Caco-2 (cell line): ENCODE measurements at regions of chr2 and their contacts with region 1.

Region 1: GRCh38 chr2:204325468-204325867 is 219.8 kb upstream of the PARD3B start:
- DNase-seq: peak; percentile 89 to 90
- H3K4me3 ChIP-seq: no peak overlapping the region
- H3K4me3 Mint-ChIP-seq: no peak overlapping the region
- H3K27ac Mint-ChIP-seq: peak overlapping the region; percentile 56
- H3K4me1 ChIP-seq: peaks cover 4% of the 10 kb centered on the region
- H3K4me1 Mint-ChIP-seq: peaks cover 28% of the 10 kb centered on the region
- H3K27me3 ChIP-seq: no peaks in the 10 kb centered on the region
- H3K27me3 Mint-ChIP-seq: no peaks in the 10 kb centered on the region
- CTCF ChIP-seq: peak; percentile 76 to 89

Region 2: GRCh38 chr2:204260162-204260877 is 65.1 kb before region 1 on chr2:
- CTCF ChIA-PET with region 1: no interaction called
- POLR2A ChIA-PET with region 1: no interaction called
- intact Hi-C with region 1: loop called (anchors 2 kb)
- DNase-seq: peak; percentile 71 to 75
- H3K4me3 ChIP-seq: no peak overlapping the region
- H3K4me3 Mint-ChIP-seq: no peak overlapping the region
- H3K27ac Mint-ChIP-seq: no peak overlapping the region
- H3K4me1 ChIP-seq: peaks cover 9% of the 10 kb centered on the region; the same call in 1 of the 2 replicates
- H3K4me1 Mint-ChIP-seq: peaks cover 26% of the 10 kb centered on the region
- H3K27me3 ChIP-seq: no peaks in the 10 kb centered on the region
- H3K27me3 Mint-ChIP-seq: no peaks in the 10 kb centered on the region
- CTCF ChIP-seq: peak; percentile 81 to 88

Region 3: GRCh38 chr2:204416228-204416627 is 90.8 kb after region 1 on chr2:
- CTCF ChIA-PET with region 1: no interaction called
- POLR2A ChIA-PET with region 1: no interaction called
- intact Hi-C with region 1: no loop called
- DNase-seq: no peak
- H3K4me3 ChIP-seq: no peak overlapping the region
- H3K4me3 Mint-ChIP-seq: no peak overlapping the region
- H3K27ac Mint-ChIP-seq: no peak overlapping the region
- H3K4me1 ChIP-seq: no peaks in the 10 kb centered on the region
- H3K4me1 Mint-ChIP-seq: no peaks in the 10 kb centered on the region
- H3K27me3 ChIP-seq: no peaks in the 10 kb centered on the region
- H3K27me3 Mint-ChIP-seq: no peaks in the 10 kb centered on the region
- CTCF ChIP-seq: no peak

Region 4: GRCh38 chr2:204611017-204611631 is 285.7 kb after region 1 on chr2:
- CTCF ChIA-PET with region 1: no interaction called
- POLR2A ChIA-PET with region 1: no interaction called
- intact Hi-C with region 1: loop called (anchors 5 kb)
- DNase-seq: peak; percentile 44 to 69
- H3K4me3 ChIP-seq: no peak overlapping the region
- H3K4me3 Mint-ChIP-seq: peak overlapping the region; percentile 52
- H3K27ac Mint-ChIP-seq: peak overlapping the region; percentile 85
- H3K4me1 ChIP-seq: peaks cover 60% of the 10 kb centered on the region
- H3K4me1 Mint-ChIP-seq: peaks cover 64% of the 10 kb centered on the region
- H3K27me3 ChIP-seq: no peaks in the 10 kb centered on the region
- H3K27me3 Mint-ChIP-seq: no peaks in the 10 kb centered on the region
- CTCF ChIP-seq: no peak

Region 5: GRCh38 chr2:204691911-204692510 is 366.5 kb after region 1 on chr2:
- CTCF ChIA-PET with region 1: no interaction called
- POLR2A ChIA-PET with region 1: no interaction called
- intact Hi-C with region 1: loop called (anchors 1 kb)
- DNase-seq: peak; percentile 79 to 81
- H3K4me3 ChIP-seq: no peak overlapping the region
- H3K4me3 Mint-ChIP-seq: no peak overlapping the region
- H3K27ac Mint-ChIP-seq: no peak overlapping the region
- H3K4me1 ChIP-seq: peaks cover 20% of the 10 kb centered on the region
- H3K4me1 Mint-ChIP-seq: peaks cover 29% of the 10 kb centered on the region
- H3K27me3 ChIP-seq: no peaks in the 10 kb centered on the region
- H3K27me3 Mint-ChIP-seq: no peaks in the 10 kb centered on the region
- CTCF ChIP-seq: peak; percentile 61 to 92

Region 6: GRCh38 chr2:204885747-204886146 is 560.3 kb after region 1 on chr2:
- CTCF ChIA-PET with region 1: no interaction called
- POLR2A ChIA-PET with region 1: no interaction called
- intact Hi-C with region 1: loop called (anchors 10 kb)
- DNase-seq: no peak
- H3K4me3 ChIP-seq: no peak overlapping the region
- H3K4me3 Mint-ChIP-seq: no peak overlapping the region
- H3K27ac Mint-ChIP-seq: no peak overlapping the region
- H3K4me1 ChIP-seq: peaks cover 18% of the 10 kb centered on the region
- H3K4me1 Mint-ChIP-seq: peaks cover 32% of the 10 kb centered on the region
- H3K27me3 ChIP-seq: no peaks in the 10 kb centered on the region
- H3K27me3 Mint-ChIP-seq: no peaks in the 10 kb centered on the region
- CTCF ChIP-seq: peak; percentile 14 to 28